ENCODE measurements at regions of chr4 and their contacts with region 1.

Region 1: GRCh38 chr4:143230683-143231082 is 46.0 kb downstream of the USP38 start:
- DNase-seq: no peak
- H3K4me3 ChIP-seq: no peak overlapping the region
- H3K27ac ChIP-seq: no peak overlapping the region
- H3K4me1 ChIP-seq: no peaks in the 10 kb centered on the region
- CTCF ChIP-seq: no peak

Region 2: DNA sequence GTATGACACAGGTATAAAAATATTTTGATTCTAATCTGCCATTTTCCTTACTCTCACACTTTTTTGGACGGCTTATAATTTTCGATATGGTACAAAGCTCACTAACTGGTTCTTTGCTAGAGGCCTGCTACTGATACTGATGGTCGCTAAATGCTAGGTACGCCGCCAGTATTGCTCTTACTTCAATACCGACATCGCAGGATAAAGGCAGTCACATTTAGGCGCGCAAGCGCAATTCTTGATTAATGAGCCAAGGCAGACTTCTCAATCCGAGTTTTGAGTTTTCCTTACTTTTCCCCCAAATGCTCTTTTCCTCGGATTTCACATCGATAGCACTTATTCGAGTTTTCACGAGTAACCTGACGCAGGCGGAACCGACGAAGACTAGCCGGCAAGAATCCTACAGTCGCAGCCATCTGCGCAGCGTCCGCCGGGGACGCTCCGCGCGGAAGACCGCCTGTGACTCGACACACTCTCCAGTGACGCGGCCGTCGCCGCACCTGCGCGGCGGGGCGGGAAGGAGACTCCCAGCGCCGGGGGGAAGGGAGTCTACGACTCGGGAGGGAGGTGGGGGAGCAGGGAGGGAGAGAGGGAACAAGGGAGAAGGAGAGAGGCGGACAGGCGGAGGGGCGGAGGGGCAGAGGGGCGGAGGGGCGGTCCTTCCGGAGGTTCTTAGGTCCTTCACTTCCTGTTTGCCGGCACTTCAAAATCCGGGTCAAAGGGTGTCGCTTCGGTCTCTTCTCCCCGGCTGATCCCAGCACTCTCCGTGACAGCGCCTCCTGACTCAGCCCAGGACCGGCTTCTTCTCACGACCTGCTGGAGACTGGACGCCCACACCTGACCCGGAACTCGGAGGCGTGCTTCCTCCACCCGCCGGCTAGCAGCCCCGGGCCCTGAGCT is 46.2 kb before region 1 on chr4 and contains the start of gene USP38:
- CTCF ChIA-PET with region 1: no interaction called
- POLR2A ChIA-PET with region 1: no interaction called
- intact Hi-C with region 1: no loop called
- DNase-seq: peak; percentile 90
- H3K4me3 ChIP-seq: peak within 1 kb of the TSS; percentile 94
- H3K27ac ChIP-seq: peak within 1 kb of the TSS; percentile 75
- H3K4me1 ChIP-seq: peaks cover 29% of the 10 kb centered on the region
- CTCF ChIP-seq: 0 out of 2 replicates have a peak, but pooled peaks have one; percentile 46
- total RNA-seq, gene USP38: 21.8 and 23.6 TPM in 2 replicates

Region 3: DNA sequence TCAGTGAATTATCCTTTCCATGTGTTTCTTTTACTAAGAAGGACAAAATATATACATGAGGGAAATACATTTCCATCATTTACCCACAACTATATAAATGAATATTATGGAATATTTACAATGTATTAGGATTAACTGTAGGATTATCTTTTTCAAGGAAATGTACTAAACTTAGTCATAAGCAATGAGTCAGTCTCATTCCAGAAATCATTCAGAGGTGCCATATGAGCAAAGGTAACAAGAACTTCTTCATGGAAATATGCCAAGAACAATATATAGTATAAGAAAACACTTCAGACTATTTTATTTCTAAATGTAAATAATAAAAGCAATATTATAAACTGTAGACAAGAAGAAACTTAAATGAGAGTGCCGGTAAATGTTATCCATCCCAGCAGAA is 21.1 kb after region 1 on chr4:
- CTCF ChIA-PET with region 1: no interaction called
- POLR2A ChIA-PET with region 1: no interaction called
- intact Hi-C with region 1: no loop called
- DNase-seq: no peak
- H3K4me3 ChIP-seq: no peak overlapping the region
- H3K27ac ChIP-seq: no peak overlapping the region
- H3K4me1 ChIP-seq: no peaks in the 10 kb centered on the region
- CTCF ChIP-seq: no peak

Region 4: DNA sequence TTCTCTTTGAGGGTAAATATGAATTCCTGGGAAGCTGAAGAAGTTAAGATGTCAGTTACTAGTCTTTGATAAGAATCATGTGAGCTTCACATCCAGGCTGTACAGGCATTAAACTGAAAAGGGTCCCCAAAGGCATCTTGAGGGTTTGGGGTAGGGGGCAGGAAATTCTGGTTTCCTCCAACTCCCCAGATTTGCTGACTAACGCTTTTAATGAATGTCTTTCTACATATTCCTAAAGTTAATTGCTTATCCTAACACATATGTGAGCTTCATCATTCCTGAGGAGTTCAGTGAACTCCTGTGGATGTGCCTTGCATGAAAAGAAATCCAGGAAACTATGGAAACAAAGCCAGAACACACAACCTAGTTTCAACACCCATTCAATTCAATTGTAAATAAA is 32.2 kb after region 1 on chr4:
- CTCF ChIA-PET with region 1: no interaction called
- POLR2A ChIA-PET with region 1: interaction called, 13 read pairs
- intact Hi-C with region 1: no loop called
- DNase-seq: no peak
- H3K4me3 ChIP-seq: no peak overlapping the region
- H3K27ac ChIP-seq: no peak overlapping the region
- H3K4me1 ChIP-seq: no peaks in the 10 kb centered on the region
- CTCF ChIP-seq: no peak